ENCODE measurements at regions of chr10 and their contacts with region 1.

Region 1: DNA sequence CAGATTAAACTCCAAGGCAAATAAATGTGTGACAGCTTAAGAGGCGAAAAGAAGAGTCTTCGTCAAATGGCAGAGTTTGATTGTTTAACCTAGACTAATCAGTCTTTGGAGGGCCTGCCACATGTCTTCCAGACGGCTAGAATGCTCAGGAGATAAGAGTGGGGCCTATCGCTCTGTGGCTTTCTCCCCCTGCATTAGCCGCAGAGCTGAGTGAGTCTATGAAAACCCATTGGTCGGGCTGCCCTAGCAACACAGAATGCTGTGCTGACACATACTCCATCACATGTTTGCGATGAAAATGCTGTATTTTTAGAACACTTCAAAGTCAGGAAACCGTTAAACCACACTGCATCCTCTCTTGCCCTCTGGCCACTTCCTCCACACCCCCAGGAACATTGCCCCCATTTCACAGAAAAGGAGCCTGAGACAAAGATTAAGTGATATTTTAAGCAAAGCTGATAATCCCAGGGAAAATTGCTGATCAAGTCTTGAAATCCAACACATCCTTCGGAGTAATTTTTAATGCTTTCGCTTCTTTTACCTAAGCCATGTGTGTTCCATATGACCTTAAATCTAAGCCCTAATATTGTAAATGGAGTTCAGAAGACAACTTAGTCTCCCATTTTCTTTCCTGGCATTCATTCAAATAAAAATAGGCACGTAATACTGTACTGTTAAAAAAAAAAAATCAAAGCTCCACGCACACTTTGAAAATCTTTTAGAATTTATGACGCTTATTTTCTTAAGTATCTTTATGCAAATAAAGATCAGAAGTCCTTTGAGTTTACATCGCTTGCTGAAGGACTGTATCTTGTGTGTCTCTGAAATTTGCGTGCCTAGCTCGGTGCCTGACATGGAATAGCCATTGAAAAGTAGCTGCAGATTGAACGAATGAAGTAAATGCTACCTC is 161.2 kb downstream of the CELF2 start:
- DNase-seq: peak; percentile 92
- H3K4me3 Mint-ChIP-seq: no peak overlapping the region
- H3K27ac Mint-ChIP-seq: no peak overlapping the region
- H3K4me1 Mint-ChIP-seq: peaks cover 92% of the 10 kb centered on the region
- H3K27me3 Mint-ChIP-seq: no peaks in the 10 kb centered on the region

Region 2: DNA sequence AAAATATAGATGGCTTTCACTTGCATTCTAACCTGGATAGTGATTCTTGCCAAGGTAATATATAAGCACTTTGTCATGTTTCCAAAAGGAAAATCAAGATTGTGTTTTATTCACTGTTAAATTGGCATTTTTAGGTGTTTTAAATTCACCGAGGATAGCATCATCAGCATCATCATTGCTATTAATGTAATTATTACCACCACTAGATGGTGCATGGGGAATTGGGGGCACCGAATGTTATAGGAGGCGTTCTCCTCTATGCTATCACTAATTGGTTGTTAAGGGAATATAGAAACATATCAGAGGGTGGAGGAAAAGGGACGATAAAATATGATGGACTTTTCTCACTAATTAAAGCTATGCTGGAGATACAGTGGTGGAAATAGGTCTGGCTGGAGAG is 65.7 kb before region 1 on chr10:
- CTCF ChIA-PET with region 1: no interaction called
- POLR2A ChIA-PET with region 1: interaction called, 10 read pairs
- DNase-seq: no peak
- H3K4me3 Mint-ChIP-seq: no peak overlapping the region
- H3K27ac Mint-ChIP-seq: no peak overlapping the region
- H3K4me1 Mint-ChIP-seq: peaks cover 15% of the 10 kb centered on the region
- H3K27me3 Mint-ChIP-seq: peaks cover 4% of the 10 kb centered on the region

Region 3: GRCh38 chr10:11165591-11166543 is 13.0 kb before region 1 on chr10:
- CTCF ChIA-PET with region 1: interaction called, 71 read pairs
- POLR2A ChIA-PET with region 1: interaction called, 887 read pairs
- DNase-seq: peak; percentile 82
- H3K4me3 Mint-ChIP-seq: no peak overlapping the region
- H3K27ac Mint-ChIP-seq: peak overlapping the region; percentile 100
- H3K4me1 Mint-ChIP-seq: peaks cover 32% of the 10 kb centered on the region
- H3K27me3 Mint-ChIP-seq: no peaks in the 10 kb centered on the region

Region 4: GRCh38 chr10:11209830-11210181 is 30.9 kb after region 1 on chr10:
- CTCF ChIA-PET with region 1: no interaction called
- POLR2A ChIA-PET with region 1: interaction called, 38 read pairs
- DNase-seq: no peak
- H3K4me3 Mint-ChIP-seq: peak overlapping the region; percentile 56
- H3K27ac Mint-ChIP-seq: peak overlapping the region; percentile 68
- H3K4me1 Mint-ChIP-seq: peaks cover 98% of the 10 kb centered on the region
- H3K27me3 Mint-ChIP-seq: no peaks in the 10 kb centered on the region

Region 5: GRCh38 chr10:11225935-11226334 is 47.1 kb after region 1 on chr10:
- CTCF ChIA-PET with region 1: no interaction called
- POLR2A ChIA-PET with region 1: interaction called, 106 read pairs
- DNase-seq: peak; percentile 74
- H3K4me3 Mint-ChIP-seq: no peak overlapping the region
- H3K27ac Mint-ChIP-seq: peak overlapping the region; percentile 89
- H3K4me1 Mint-ChIP-seq: peaks cover 93% of the 10 kb centered on the region
- H3K27me3 Mint-ChIP-seq: no peaks in the 10 kb centered on the region

Region 6: DNA sequence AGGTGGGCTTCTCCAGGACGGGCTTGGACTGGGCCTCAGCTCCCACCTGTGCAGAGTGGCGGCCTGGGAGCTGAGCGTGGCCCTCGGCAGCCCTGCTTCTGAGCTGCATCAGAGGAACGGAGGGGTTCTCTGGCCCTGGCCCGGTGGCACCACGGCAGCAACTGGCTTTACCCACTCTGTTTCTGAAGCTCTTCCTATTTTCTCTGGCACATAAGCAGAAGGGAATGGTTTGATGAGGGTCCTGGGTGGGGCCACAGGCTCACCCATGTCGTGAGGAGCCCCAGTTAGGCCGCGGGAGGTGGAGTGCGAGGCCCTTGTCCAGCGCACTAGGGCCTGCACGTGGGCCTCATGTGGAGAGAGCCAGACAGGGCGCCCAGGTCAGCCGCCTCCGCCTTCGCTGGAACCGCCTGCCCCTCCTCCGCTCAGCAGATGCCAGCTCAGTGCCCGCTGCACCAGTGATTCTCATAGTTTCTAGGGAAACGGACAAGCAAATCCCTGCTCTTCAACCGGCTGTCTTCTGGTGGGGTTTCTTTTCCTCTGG is 122.8 kb after region 1 on chr10:
- CTCF ChIA-PET with region 1: no interaction called
- POLR2A ChIA-PET with region 1: no interaction called
- DNase-seq: no peak
- H3K4me3 Mint-ChIP-seq: no peak overlapping the region
- H3K27ac Mint-ChIP-seq: no peak overlapping the region
- H3K4me1 Mint-ChIP-seq: peaks cover 3% of the 10 kb centered on the region
- H3K27me3 Mint-ChIP-seq: no peaks in the 10 kb centered on the region